HCT116 (cell line): ENCODE measurements at regions of chr15 and their contacts with region 1.

Region 1: GRCh38 chr15:59087731-59088130 is 17.2 kb upstream of the CCNB2 start:
- DNase-seq: no peak
- ATAC-seq: no peak
- H3K4me3 ChIP-seq: no peak overlapping the region
- H3K27ac ChIP-seq: no peak overlapping the region
- H3K4me1 ChIP-seq: no peaks in the 10 kb centered on the region
- H3K27me3 ChIP-seq: no peaks in the 10 kb centered on the region
- CTCF ChIP-seq: no peak
- POLR2A ChIP-seq: no peak
- RAD21 ChIP-seq: no peak

Region 2: GRCh38 chr15:59104912-59105732 is 17.4 kb after region 1 on chr15 and contains the start of gene CCNB2:
- CTCF ChIA-PET with region 1: no interaction called
- POLR2A ChIA-PET with region 1: no interaction called
- RAD21 ChIA-PET with region 1: no interaction called
- intact Hi-C with region 1: loop called (anchors 2 kb)
- DNase-seq: peak; percentile 88
- ATAC-seq: peak; percentile 98
- H3K4me3 ChIP-seq: peak within 1 kb of the TSS; percentile 82 to 85
- H3K27ac ChIP-seq: peak within 1 kb of the TSS; percentile 70
- H3K4me1 ChIP-seq: peaks cover 9 to 12% of the 10 kb centered on the region in 2 experiments
- H3K27me3 ChIP-seq: no peaks in the 10 kb centered on the region
- CTCF ChIP-seq: no peak
- POLR2A ChIP-seq: peak; percentile 67
- RAD21 ChIP-seq: no peak
- total RNA-seq, gene CCNB2: 88.7 TPM

Region 3: GRCh38 chr15:59399465-59400102 is 311.9 kb after region 1 on chr15:
- CTCF ChIA-PET with region 1: no interaction called
- POLR2A ChIA-PET with region 1: no interaction called
- RAD21 ChIA-PET with region 1: no interaction called
- intact Hi-C with region 1: no loop called
- DNase-seq: no peak
- ATAC-seq: no peak
- H3K4me3 ChIP-seq: no peak overlapping the region
- H3K27ac ChIP-seq: no peak overlapping the region
- H3K4me1 ChIP-seq: no peaks in the 10 kb centered on the region
- H3K27me3 ChIP-seq: no peaks in the 10 kb centered on the region
- CTCF ChIP-seq: no peak
- POLR2A ChIP-seq: no peak
- RAD21 ChIP-seq: no peak